AG04450 (cell line): ENCODE measurements at regions of chr1 and their contacts with region 1.

Region 1: GRCh38 chr1:244361764-244362473 is 89.8 kb downstream of the ADSS2 start:
- DNase-seq: peak; percentile 68
- H3K4me3 ChIP-seq: peak overlapping the region; percentile 49
- H3K27ac ChIP-seq: peak overlapping the region; percentile 72
- H3K27me3 ChIP-seq: no peaks in the 10 kb centered on the region
- CTCF ChIP-seq: no peak

Region 2: GRCh38 chr1:245019910-245020486 is 658.1 kb after region 1 on chr1:
- CTCF ChIA-PET with region 1: no interaction called
- POLR2A ChIA-PET with region 1: interaction called, 18 read pairs
- DNase-seq: no peak
- H3K4me3 ChIP-seq: no peak overlapping the region
- H3K27ac ChIP-seq: no peak overlapping the region
- H3K27me3 ChIP-seq: no peaks in the 10 kb centered on the region
- CTCF ChIP-seq: no peak